Heart right ventricle (tissue), 16 donors: ENCODE measurements at regions of chr20 and their contacts with region 1.

Region 1: GRCh38 chr20:47785854-47786764 is 828 bp upstream of the SULF2 start:
- DNase-seq: peak; percentile 63 to 81
- ATAC-seq: peak; percentile 82 to 94 (median 90)
- H3K4me3 ChIP-seq: peak overlapping the region; percentile 26 to 75 (median 60)
- H3K27ac ChIP-seq: peak overlapping the region; percentile 62 to 87 (median 85)
- H3K4me1 ChIP-seq: peaks cover 0 to 51% (median 21%) of the 10 kb centered on the region in 9 donors
- H3K27me3 ChIP-seq: peaks cover 0 to 70% (median 10%) of the 10 kb centered on the region in 7 donors
- CTCF ChIP-seq: peak; percentile 51 to 88 (median 75)

Region 2: GRCh38 chr20:47356526-47357295 is 429.4 kb before region 1 on chr20 and contains the start of gene ZMYND8:
- intact Hi-C with region 1: no loop called
- DNase-seq: peak; percentile 86 to 89
- ATAC-seq: peak; percentile 45 to 73 (median 64)
- H3K4me3 ChIP-seq: peak within 1 kb of the TSS in 6 of 10 donors; percentile 7 to 39 (median 16)
- H3K27ac ChIP-seq: peak within 1 kb of the TSS; percentile 97 to 99 (median 98)
- H3K4me1 ChIP-seq: peaks cover 69 to 100% (median 100%) of the 10 kb centered on the region in 9 donors
- H3K27me3 ChIP-seq: no peaks in the 10 kb centered on the region
- CTCF ChIP-seq: no peak
- total RNA-seq, gene ZMYND8: 22.0 to 39.0 (median 29.0) TPM

Region 3: GRCh38 chr20:47663333-47664067 is 122.6 kb before region 1 on chr20:
- intact Hi-C with region 1: loop called in 1 of 10 experiments (anchors 5 kb)
- DNase-seq: peak; percentile 76 to 79
- ATAC-seq: peak; percentile 75 to 92 (median 84)
- H3K4me3 ChIP-seq: no peak overlapping the region
- H3K27ac ChIP-seq: no peak overlapping the region
- H3K4me1 ChIP-seq: peaks cover 3 to 24% (median 10%) of the 10 kb centered on the region in 9 donors
- H3K27me3 ChIP-seq: no peaks in the 10 kb centered on the region
- CTCF ChIP-seq: peak; percentile 96 to 99 (median 97)

Region 4: DNA sequence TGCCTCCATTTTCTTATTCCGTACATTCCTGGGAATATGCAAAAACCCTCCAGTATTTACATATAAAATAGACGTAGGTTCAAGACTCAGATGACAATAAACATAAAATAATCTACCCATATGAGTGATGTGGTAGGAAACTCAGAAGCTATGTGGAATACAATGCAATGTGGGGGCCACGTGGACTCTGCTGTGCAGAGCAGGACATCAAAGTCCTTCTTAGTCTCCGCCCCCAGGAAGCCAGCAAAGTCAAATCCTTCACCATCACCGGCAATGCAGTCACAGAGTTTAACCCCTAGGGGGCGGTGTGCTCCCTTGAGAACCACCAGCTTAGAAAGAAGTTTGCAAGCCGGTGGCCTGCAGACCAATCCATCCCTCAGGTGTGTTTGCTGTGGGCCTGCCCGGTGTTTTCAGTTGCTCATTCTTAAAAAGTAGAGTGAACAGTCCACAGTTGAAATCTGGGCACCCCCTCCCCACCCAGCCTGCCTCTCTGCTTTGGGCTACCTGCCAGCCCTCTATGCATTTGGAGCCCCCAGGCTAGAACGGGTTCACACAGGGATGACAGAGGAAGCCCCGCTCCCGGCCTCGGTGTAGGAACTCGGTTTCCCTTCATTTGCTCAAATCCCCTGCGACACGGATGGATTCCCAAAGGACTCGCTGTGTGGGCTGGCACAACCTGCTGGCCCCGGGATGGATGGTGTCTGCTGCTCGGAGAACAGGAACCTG is 60.7 kb before region 1 on chr20:
- intact Hi-C with region 1: loop called in 6 of 10 experiments (anchors 2 to 10 kb)
- DNase-seq: peak; percentile 41 to 76
- ATAC-seq: peak; percentile 29 to 80 (median 69)
- H3K4me3 ChIP-seq: no peak overlapping the region
- H3K27ac ChIP-seq: no peak overlapping the region
- H3K4me1 ChIP-seq: peaks cover 0 to 40% (median 5%) of the 10 kb centered on the region in 9 donors
- H3K27me3 ChIP-seq: no peaks in the 10 kb centered on the region
- CTCF ChIP-seq: peak; percentile 77 to 92 (median 87)

Region 5: GRCh38 chr20:47914792-47915191 is 128.7 kb after region 1 on chr20:
- intact Hi-C with region 1: no loop called
- DNase-seq: no peak
- ATAC-seq: no peak
- H3K4me3 ChIP-seq: no peak overlapping the region
- H3K27ac ChIP-seq: no peak overlapping the region
- H3K4me1 ChIP-seq: no peaks in the 10 kb centered on the region
- H3K27me3 ChIP-seq: peaks cover 0 to 28% (median 11%) of the 10 kb centered on the region in 7 donors
- CTCF ChIP-seq: no peak

Region 6: GRCh38 chr20:48102914-48103597 is 316.9 kb after region 1 on chr20:
- intact Hi-C with region 1: no loop called
- DNase-seq: no peak
- ATAC-seq: no peak
- H3K4me3 ChIP-seq: no peak overlapping the region
- H3K27ac ChIP-seq: no peak overlapping the region
- H3K4me1 ChIP-seq: peaks cover 0 to 5% (median 0%) of the 10 kb centered on the region in 9 donors
- H3K27me3 ChIP-seq: peaks cover 0 to 6% (median 3%) of the 10 kb centered on the region in 7 donors
- CTCF ChIP-seq: no peak

Region 7: DNA sequence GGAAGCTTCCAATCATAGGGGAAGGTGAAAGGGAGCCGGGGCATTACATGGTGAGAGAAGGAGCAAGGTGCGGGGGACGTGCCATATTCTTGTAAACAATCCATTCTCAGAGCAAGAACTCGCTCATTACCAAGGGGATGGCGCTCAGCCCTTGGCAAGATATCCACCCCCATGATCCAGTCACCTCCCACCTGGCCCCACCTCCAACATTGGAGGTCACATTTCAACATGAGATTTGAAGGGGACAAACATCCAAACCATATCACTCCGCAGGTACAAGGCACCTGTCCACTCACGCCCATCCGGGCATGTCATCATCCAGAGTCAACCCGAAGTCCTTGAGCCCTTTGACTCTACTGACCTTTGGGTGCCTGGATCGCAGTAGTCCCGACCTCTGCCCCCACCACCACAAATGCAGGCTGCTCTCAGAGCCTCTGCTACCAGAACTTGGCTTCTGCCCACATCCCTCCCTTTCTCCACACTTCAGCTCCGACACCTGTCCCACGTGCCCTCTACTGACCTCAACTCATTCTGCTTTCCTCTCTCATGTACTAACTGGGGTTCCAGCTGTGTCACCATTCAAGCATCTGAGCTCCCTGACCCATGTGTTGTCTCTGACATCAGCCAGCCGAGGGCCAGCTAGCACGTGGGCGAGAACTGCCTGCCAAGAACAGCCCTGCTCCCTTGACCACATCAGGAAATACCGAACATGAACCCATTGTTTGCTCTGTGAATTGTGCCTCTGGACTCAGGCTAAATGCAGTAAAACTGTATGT is 497.4 kb after region 1 on chr20:
- intact Hi-C with region 1: loop called in 1 of 10 experiments (anchors 10 kb)
- DNase-seq: peak; percentile 22 to 23
- ATAC-seq: peak in 7 of 8 donors; percentile 50 to 87 (median 76)
- H3K4me3 ChIP-seq: no peak overlapping the region
- H3K27ac ChIP-seq: no peak overlapping the region
- H3K4me1 ChIP-seq: peaks cover 0 to 57% (median 27%) of the 10 kb centered on the region in 9 donors
- H3K27me3 ChIP-seq: peaks cover 0 to 10% (median 0%) of the 10 kb centered on the region in 7 donors
- CTCF ChIP-seq: no peak

Region 8: DNA sequence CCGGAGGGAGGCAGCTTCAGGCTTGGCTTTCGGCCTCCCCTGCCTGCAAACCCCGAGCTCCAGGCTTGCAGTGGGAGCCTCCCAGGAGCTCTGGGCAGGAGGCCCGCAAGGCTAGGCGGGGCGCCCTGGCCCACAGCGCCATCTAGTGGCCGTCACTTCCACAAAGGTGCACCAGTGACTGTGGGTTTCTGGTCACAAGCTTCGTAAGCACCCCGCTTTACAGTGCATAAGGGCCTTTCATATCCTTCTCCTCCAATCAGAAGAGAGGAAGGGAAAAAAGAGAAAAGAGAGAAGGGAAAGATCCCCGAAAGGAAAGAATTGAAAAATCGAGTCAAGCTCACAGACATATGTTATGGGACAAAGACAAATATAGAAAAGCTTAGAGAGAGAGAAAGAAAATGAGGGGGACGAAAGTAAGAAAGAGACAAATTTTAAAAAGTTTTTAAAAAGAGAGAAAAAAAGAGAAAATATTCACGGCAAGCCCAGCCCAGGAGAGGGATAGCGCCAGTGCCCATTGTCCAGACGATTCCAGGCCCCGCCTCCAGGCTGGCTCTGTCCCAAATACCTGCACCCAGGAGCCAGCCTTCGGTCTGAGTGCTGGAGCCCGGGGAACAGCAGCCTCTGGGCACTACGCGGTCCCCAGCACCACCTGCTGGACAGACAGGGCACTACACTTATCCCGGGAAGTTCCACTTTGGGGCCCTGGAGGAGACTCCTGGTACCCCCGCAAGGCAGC is 834.6 kb after region 1 on chr20:
- intact Hi-C with region 1: loop called (anchors 1 to 5 kb)
- DNase-seq: peak; percentile 87 to 90
- ATAC-seq: peak; percentile 86 to 98 (median 94)
- H3K4me3 ChIP-seq: peak overlapping the region in 8 of 10 donors; percentile 16 to 41 (median 30)
- H3K27ac ChIP-seq: no peak overlapping the region
- H3K4me1 ChIP-seq: peaks cover 12 to 27% (median 20%) of the 10 kb centered on the region in 9 donors
- H3K27me3 ChIP-seq: no peaks in the 10 kb centered on the region
- CTCF ChIP-seq: peak; percentile 75 to 95 (median 77)